HepG2 (cell line): ENCODE measurements at regions of chr1 and their contacts with region 1.

Region 1: GRCh38 chr1:50978144-50978851 is 8.3 kb downstream of the CDKN2C start:
- DNase-seq: peak; percentile 49
- ATAC-seq: peak; percentile 75
- H3K4me3 ChIP-seq: peak overlapping the region; percentile 75 to 95 (median 89)
- H3K27ac ChIP-seq: peak overlapping the region; percentile 93
- H3K4me1 ChIP-seq: peaks cover 21% of the 10 kb centered on the region
- H3K27me3 ChIP-seq: no peaks in the 10 kb centered on the region; a peak in 1 of 5 replicates
- CTCF ChIP-seq: no peak
- EP300 ChIP-seq: no peak
- POLR2A ChIP-seq: peak; percentile 60 to 65
- RAD21 ChIP-seq: peak; percentile 34; the same call in 1 of the 2 replicates

Region 2: DNA sequence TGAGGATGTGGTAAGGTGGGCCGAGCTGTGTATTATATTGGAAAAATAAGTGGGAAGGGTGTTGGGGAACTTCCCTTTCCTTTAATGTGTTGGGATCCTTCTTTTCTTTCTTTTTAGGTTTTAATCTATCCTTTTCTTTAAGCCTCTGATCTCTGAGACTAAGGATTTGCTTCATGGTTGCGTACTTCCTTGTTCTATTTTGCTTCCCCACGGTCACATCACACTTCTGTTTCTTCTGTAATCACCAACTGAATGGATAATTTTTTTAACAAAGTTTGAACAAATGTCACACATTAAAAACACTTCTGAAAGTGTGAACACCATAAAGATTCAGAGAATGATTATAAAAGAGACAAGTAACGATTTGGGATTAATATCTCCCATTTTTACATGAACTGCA is 572.5 kb before region 1 on chr1:
- CTCF ChIA-PET with region 1: no interaction called
- POLR2A ChIA-PET with region 1: no interaction called
- in situ Hi-C with region 1: no loop called
- intact Hi-C with region 1: no loop called
- DNase-seq: no peak
- ATAC-seq: no peak
- H3K4me3 ChIP-seq: no peak overlapping the region
- H3K27ac ChIP-seq: no peak overlapping the region
- H3K4me1 ChIP-seq: no peaks in the 10 kb centered on the region
- H3K27me3 ChIP-seq: peaks cover 0 to 2% of the 10 kb centered on the region in 2 experiments; a peak in 1 of 5 replicates
- CTCF ChIP-seq: no peak
- EP300 ChIP-seq: no peak
- POLR2A ChIP-seq: no peak
- RAD21 ChIP-seq: no peak

Region 3: GRCh38 chr1:50774759-50775351 is 203.4 kb before region 1 on chr1:
- CTCF ChIA-PET with region 1: no interaction called
- POLR2A ChIA-PET with region 1: no interaction called
- in situ Hi-C with region 1: loop called (anchors 5 kb)
- intact Hi-C with region 1: no loop called
- DNase-seq: peak; percentile 63
- ATAC-seq: peak; percentile 59; the same call in 1 of the 3 replicates
- H3K4me3 ChIP-seq: no peak overlapping the region
- H3K27ac ChIP-seq: no peak overlapping the region
- H3K4me1 ChIP-seq: peaks cover 14% of the 10 kb centered on the region
- H3K27me3 ChIP-seq: no peaks in the 10 kb centered on the region
- CTCF ChIP-seq: peak; percentile 76
- EP300 ChIP-seq: no peak
- POLR2A ChIP-seq: no peak
- RAD21 ChIP-seq: peak; percentile 56

Region 4: DNA sequence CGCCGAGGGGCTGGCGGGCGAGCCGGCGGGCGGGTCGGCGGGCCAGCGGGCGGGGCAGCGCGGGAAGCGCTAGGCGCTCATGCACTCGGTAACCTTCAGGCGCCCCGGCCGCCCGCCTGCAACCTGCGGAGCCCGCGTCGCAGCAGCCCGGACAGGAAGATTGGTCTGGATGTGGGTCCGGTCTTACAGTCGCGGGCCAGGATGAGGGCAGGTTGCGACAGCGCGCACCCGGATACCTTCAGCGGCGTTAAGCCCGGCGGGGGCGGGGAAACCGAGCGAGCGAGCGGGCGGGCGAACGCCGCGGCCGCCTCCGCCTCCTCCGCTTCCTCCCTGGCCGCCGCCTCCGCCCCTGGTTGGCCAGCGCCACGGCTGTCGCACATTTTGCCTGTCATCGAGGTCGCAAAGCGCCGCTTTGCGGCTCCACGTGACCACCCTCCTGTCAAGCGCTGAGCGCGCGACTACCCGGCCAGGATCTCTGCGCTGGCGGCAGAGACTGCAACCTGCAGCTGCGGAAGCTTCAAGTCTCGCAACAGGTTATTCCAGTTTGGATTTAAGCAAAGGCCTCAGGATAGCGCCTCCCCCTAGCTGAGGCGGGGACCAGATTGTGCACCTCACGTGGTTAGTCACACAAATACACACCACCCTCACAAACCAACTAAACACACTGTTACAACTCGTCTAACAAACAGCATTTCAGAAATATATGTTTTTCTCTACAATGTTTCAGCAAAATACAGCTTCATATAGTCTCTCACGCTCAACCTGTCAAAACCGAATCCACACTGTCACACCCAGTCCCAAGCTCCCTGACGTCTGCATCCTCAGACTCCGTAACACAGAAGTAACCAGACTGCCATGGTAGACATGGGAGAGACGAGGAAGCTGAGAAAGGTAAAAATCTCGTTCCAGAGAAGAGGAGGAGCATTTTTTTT is 18.1 kb before region 1 on chr1 and contains the start of gene FAF1:
- CTCF ChIA-PET with region 1: no interaction called
- POLR2A ChIA-PET with region 1: interaction called, 20 read pairs
- in situ Hi-C with region 1: no loop called
- intact Hi-C with region 1: no loop called
- DNase-seq: peak; percentile 94
- ATAC-seq: peak; percentile 97
- H3K4me3 ChIP-seq: peak within 1 kb of the TSS; percentile 87 to 99 (median 90)
- H3K27ac ChIP-seq: peak within 1 kb of the TSS; percentile 71
- H3K4me1 ChIP-seq: peaks cover 16% of the 10 kb centered on the region
- H3K27me3 ChIP-seq: no peaks in the 10 kb centered on the region; a peak in 1 of 5 replicates
- CTCF ChIP-seq: peak; percentile 42; the same call in 1 of the 2 replicates
- EP300 ChIP-seq: peak in 1 of 2 experiments; percentile 35; a peak in 1 of 4 replicates
- POLR2A ChIP-seq: peak; percentile 73 to 86
- RAD21 ChIP-seq: peak; percentile 37; the same call in 1 of the 2 replicates
- total RNA-seq, gene FAF1: 63.3 and 82.8 TPM in 2 replicates

Region 5: GRCh38 chr1:50968158-50968820 is 10.0 kb before region 1 on chr1:
- CTCF ChIA-PET with region 1: no interaction called
- POLR2A ChIA-PET with region 1: interaction called, 37 read pairs
- in situ Hi-C with region 1: no loop called
- intact Hi-C with region 1: loop called (anchors 1 kb)
- DNase-seq: peak; percentile 76
- ATAC-seq: peak; percentile 89
- H3K4me3 ChIP-seq: peak overlapping the region; percentile 91 to 99 (median 98)
- H3K27ac ChIP-seq: peak overlapping the region; percentile 98
- H3K4me1 ChIP-seq: peaks cover 17% of the 10 kb centered on the region; the same call in 1 of the 2 replicates
- H3K27me3 ChIP-seq: no peaks in the 10 kb centered on the region; a peak in 1 of 5 replicates
- CTCF ChIP-seq: peak; percentile 73
- EP300 ChIP-seq: peak in 1 of 2 experiments; percentile 69; a peak in 2 of 4 replicates
- POLR2A ChIP-seq: peak; percentile 62 to 75
- RAD21 ChIP-seq: peak; percentile 64

Region 6: DNA sequence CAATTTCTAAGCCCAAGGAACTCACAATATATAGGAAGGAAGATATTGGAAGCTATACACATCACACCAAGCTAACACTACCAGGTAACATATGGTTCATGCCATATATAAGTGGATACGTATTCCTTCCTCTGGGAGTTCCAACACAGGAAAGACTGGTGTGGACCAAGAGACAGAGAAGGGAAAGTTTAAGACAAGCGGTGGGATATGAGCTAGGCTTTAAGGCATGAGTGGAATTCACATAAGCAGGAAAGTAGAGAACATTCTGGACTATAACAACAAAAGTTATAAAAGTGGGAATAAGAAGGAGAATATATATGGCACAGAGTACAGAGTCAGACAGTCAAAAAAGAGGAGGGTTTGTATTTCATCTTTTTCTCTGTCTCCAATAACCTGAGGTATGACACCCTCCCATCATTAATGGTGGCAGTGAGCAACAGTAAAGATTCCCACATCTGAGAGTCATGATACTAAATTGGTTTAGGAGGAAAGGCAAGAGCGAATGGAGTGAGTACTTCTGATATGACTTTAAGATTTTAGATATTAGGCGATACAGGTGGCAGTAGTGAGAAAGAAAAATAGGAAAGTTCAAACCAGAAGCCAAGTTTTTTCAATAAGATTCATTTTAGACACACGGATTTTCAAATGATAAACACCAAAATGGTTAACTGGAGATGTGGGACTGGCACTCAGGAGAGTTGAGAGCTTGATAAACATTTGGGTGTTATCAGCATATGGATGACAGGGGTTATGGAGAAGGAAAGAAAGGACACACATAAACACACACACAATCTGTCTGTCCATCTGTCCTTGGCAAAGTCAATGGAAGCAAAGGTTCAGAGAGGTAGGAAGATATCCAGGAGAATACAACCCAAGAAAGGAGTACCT is 439.4 kb after region 1 on chr1:
- CTCF ChIA-PET with region 1: no interaction called
- POLR2A ChIA-PET with region 1: no interaction called
- in situ Hi-C with region 1: no loop called
- intact Hi-C with region 1: no loop called
- DNase-seq: no peak
- ATAC-seq: no peak
- H3K4me3 ChIP-seq: no peak overlapping the region
- H3K27ac ChIP-seq: no peak overlapping the region
- H3K4me1 ChIP-seq: no peaks in the 10 kb centered on the region
- H3K27me3 ChIP-seq: no peaks in the 10 kb centered on the region
- CTCF ChIP-seq: no peak
- EP300 ChIP-seq: no peak
- POLR2A ChIP-seq: no peak
- RAD21 ChIP-seq: no peak

Region 7: GRCh38 chr1:52243221-52243987 is 1265.1 kb after region 1 on chr1:
- CTCF ChIA-PET with region 1: no interaction called
- POLR2A ChIA-PET with region 1: no interaction called
- in situ Hi-C with region 1: no loop called
- intact Hi-C with region 1: no loop called
- DNase-seq: no peak
- ATAC-seq: no peak
- H3K4me3 ChIP-seq: no peak overlapping the region
- H3K27ac ChIP-seq: no peak overlapping the region
- H3K4me1 ChIP-seq: peaks cover 8% of the 10 kb centered on the region
- H3K27me3 ChIP-seq: no peaks in the 10 kb centered on the region; a peak in 1 of 5 replicates
- CTCF ChIP-seq: no peak
- EP300 ChIP-seq: no peak
- POLR2A ChIP-seq: no peak
- RAD21 ChIP-seq: no peak